PC-9 (cell line): ENCODE measurements at regions of chr21 and their contacts with region 1.

Region 1: GRCh38 chr21:45923146-45923545 is 58.4 kb upstream of the COL6A1 start:
- DNase-seq: peak in 1 of 2 experiments; percentile 45
- H3K4me3 ChIP-seq: no peak overlapping the region
- H3K27ac ChIP-seq: no peak overlapping the region
- H3K4me1 ChIP-seq: no peaks in the 10 kb centered on the region
- H3K27me3 ChIP-seq: peaks cover 8% of the 10 kb centered on the region; the same call in 1 of the 2 replicates
- CTCF ChIP-seq: peak; percentile 78

Region 2: GRCh38 chr21:44939532-44940115 is 983.5 kb before region 1 on chr21 and contains the start of gene SLX9:
- CTCF ChIA-PET with region 1: no interaction called
- POLR2A ChIA-PET with region 1: no interaction called
- intact Hi-C with region 1: no loop called
- DNase-seq: peak; percentile 55 to 80
- H3K4me3 ChIP-seq: peak within 1 kb of the TSS; percentile 74
- H3K27ac ChIP-seq: 0 out of 2 replicates have a peak within 1 kb of the TSS, but pooled peaks have one; percentile 34
- H3K4me1 ChIP-seq: peaks cover 18% of the 10 kb centered on the region
- H3K27me3 ChIP-seq: no peaks in the 10 kb centered on the region
- CTCF ChIP-seq: no peak
- total RNA-seq, gene SLX9: 22.8 and 30.4 TPM in 2 replicates

Region 3: DNA sequence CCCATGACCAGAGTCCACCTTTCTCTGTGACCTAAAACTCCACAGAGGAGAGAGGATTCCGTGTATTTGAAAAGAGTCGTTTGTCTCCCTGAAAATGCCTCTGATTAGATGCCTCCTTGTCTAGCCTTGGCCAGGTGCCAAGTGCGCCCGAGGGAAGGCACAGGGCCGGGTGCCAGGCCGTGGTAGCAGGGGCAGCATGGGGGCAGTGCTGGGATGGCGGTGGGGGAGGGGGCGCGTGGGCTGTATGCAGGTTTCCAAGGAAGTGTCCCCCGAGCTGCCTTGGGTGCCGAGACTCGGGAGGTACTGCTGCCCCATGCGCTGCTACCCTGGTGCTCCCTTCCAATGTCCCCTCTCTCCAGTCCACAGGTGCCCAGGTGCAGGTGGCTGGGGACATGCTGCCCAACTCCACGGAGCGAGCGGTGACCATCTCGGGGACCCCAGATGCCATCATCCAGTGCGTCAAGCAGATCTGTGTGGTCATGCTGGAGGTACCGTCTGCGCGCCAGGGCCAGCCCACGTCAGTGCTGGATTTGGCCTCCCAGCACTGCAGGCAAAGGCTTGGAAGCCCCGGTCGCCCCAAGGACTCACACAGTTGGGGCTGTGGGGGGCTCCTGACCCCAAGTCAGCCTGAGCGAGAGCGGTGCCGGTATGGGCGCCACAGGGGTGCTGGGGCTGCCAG is 12.5 kb before region 1 on chr21:
- CTCF ChIA-PET with region 1: interaction called, 10 read pairs
- POLR2A ChIA-PET with region 1: no interaction called
- intact Hi-C with region 1: no loop called
- DNase-seq: no peak
- H3K4me3 ChIP-seq: no peak overlapping the region
- H3K27ac ChIP-seq: no peak overlapping the region
- H3K4me1 ChIP-seq: peaks cover 18% of the 10 kb centered on the region
- H3K27me3 ChIP-seq: peaks cover 6% of the 10 kb centered on the region; the same call in 1 of the 2 replicates
- CTCF ChIP-seq: no peak